ENCODE measurements at regions of chr7 and their contacts with region 1.

Region 1: GRCh38 chr7:80918909-80919662 is at the start of gene SEMA3C:
- DNase-seq: peak; percentile 97
- H3K4me3 ChIP-seq: peak within 1 kb of the TSS; percentile 63 to 99 (median 99)
- H3K27ac ChIP-seq: peak within 1 kb of the TSS; percentile 97
- H3K4me1 ChIP-seq: peaks cover 34% of the 10 kb centered on the region
- H3K27me3 ChIP-seq: no peaks in the 10 kb centered on the region
- CTCF ChIP-seq: peak in 1 of 2 donors; percentile 34
- total RNA-seq, gene SEMA3C: 312 to 708 TPM

Region 2: DNA sequence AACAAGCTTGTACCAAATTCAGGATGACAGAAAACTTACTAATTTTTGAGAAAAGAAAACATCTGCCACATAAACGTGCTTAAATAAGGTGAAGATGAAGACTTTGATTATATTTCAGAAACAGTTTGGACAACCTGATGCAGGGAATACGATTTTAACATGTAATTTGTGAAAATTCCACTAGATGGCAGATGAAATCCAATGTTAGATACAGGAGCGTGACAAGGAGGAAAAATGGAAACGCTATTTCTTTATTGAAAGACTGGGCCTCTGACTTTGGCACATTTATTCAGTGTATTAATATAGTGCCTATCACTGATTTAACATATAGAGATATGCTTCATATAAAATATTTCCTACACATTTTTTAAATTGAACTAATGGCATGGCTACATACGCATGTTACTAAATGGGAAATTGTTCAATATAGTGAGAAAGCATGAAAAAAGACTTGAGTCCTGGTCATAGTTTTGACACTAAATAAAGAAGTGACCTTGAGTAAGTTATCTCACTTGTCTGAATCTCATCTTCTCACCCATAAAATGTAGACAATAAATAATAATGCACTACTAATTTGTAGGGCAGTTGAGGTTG is 219.9 kb before region 1 on chr7:
- CTCF ChIA-PET with region 1: no interaction called
- dilution Hi-C with region 1: no loop called
- in situ Hi-C with region 1: no loop called
- intact Hi-C with region 1: loop called (anchors 1 kb)
- DNase-seq: peak; percentile 32
- H3K4me3 ChIP-seq: no peak overlapping the region
- H3K27ac ChIP-seq: no peak overlapping the region
- H3K4me1 ChIP-seq: no peaks in the 10 kb centered on the region
- H3K27me3 ChIP-seq: no peaks in the 10 kb centered on the region
- CTCF ChIP-seq: peak; percentile 55 to 56

Region 3: DNA sequence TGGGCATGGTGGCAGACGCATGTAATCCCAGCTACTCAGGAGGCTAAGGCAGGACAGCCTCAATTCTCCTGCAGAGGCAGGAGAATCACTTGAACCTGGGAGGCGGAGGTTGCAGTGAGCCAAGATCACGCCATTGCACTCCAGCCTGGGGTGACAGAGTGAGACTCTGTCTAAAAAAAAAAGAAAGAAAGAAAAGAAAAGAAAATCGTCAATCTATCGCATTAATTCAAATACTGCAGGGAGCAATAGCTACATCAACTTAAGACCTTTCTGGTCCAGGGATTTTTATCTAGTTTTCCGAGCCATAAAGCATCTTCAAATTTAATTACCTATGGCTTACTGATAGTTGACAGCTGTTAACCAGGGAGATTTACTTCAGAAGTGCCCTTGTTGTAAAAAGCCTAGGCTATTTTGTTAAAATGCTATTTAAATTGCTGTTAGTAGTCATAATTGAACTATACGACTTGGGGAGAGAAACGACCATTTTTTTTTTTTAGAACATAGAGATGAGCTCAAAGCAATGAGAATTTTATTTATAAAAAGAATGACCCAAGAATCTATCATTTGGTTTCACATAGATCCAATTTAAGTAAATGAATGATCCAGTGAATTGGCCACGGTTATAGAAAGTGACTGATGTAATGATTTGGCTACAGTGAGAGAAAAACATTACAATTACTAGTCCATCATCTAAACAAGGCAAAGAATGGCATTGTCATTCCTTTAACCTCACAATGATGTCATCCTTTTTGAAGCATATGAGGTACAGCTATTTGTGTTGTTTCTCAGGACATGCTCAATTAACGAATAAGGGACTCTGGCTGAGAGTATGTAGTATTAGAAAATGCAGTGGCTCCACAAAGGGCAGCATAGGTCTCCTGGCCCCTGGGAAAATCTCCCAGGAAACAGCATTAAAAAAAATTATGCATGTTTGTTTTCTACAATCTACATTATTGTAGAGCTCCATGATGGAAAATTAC is 85.5 kb before region 1 on chr7:
- CTCF ChIA-PET with region 1: no interaction called
- dilution Hi-C with region 1: no loop called
- in situ Hi-C with region 1: no loop called
- intact Hi-C with region 1: loop called (anchors 5 kb)
- DNase-seq: peak; percentile 63
- H3K4me3 ChIP-seq: no peak overlapping the region
- H3K27ac ChIP-seq: peak overlapping the region; percentile 57
- H3K4me1 ChIP-seq: peaks cover 74% of the 10 kb centered on the region
- H3K27me3 ChIP-seq: no peaks in the 10 kb centered on the region
- CTCF ChIP-seq: no peak

Region 4: DNA sequence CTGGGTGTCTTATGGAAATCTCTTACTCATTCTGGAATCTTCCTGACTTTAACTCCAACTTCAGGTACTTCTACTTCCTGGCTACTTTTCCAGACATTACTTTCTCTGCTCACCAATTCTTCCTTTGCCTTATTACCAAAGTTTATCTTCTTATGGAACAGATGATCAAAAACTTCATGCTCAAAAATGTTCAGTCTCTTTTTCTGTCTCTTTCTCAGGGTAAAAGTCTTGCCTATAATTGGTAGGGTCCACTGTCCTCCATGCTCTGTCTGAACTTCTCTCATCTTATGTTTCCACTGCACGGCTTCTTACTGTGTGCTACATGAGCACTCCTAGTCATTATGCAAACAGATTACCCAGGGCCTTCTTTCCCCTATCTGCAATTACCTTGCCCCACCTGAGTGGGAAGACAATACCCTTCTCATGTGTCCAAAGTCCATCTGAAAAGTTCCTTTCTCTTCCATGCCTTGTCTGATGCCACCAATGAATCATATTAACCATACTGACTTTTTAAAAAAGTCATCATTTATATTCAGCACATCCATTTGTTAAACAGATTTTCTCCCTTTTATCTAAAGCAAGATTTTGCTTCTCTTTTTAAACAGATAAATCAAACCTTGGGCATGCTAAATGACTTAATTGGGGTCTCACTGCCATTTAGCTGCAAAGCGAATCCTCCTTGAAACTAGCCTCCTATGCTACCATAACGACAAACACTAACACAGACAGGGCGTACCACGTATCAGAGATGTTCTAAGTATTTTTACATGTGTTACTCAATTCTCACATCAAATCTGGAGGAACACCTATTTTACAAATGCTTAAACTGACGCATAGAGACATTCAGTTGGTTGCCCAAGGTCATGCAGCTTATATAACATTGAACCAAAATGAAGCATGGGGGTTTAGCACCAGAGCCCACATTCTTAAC is 49.0 kb before region 1 on chr7:
- CTCF ChIA-PET with region 1: no interaction called
- dilution Hi-C with region 1: no loop called
- in situ Hi-C with region 1: no loop called
- intact Hi-C with region 1: no loop called
- DNase-seq: no peak
- H3K4me3 ChIP-seq: no peak overlapping the region
- H3K27ac ChIP-seq: peak overlapping the region; percentile 39
- H3K4me1 ChIP-seq: peaks cover 11% of the 10 kb centered on the region
- H3K27me3 ChIP-seq: no peaks in the 10 kb centered on the region
- CTCF ChIP-seq: no peak

Region 5: DNA sequence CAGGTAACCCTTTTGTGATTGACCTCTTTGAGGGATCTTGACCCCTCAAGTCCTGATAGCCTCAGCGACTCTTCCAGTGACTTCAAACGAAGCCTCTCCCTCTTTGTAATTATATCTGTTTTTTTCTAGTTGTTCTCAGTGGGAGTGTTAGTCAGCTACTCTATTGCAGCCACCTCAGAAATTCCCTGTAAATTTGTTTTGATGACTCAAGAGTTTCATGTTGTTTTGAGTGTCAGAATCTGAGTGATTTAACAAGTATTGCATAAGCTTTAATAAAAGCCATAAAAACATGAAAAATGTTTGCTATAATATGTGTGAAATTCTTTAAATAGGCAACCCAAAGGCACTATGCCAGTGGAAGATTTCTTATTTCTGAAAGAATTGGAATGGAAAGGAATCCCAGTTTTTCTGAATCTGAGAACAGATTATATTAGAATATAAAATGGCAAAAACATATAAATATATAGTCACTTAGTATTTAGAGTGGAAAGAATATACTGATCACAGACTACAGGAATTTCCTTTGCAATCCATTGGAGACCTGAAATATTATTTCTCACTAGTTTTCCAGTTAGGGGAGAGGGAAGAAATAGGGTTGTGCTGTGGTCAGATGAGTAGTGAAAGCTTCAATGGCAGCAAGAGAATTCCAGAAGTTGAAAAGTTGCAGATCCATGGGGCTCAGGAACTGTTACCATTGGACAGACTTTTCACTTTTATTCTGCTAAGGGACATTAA is 94.2 kb after region 1 on chr7:
- CTCF ChIA-PET with region 1: interaction called, 4 read pairs
- dilution Hi-C with region 1: loop called (anchors 5 kb)
- in situ Hi-C with region 1: no loop called
- intact Hi-C with region 1: loop called (anchors 1 kb)
- DNase-seq: peak; percentile 92
- H3K4me3 ChIP-seq: no peak overlapping the region
- H3K27ac ChIP-seq: peak overlapping the region; percentile 82
- H3K4me1 ChIP-seq: peaks cover 17% of the 10 kb centered on the region
- H3K27me3 ChIP-seq: no peaks in the 10 kb centered on the region
- CTCF ChIP-seq: no peak

Region 6: DNA sequence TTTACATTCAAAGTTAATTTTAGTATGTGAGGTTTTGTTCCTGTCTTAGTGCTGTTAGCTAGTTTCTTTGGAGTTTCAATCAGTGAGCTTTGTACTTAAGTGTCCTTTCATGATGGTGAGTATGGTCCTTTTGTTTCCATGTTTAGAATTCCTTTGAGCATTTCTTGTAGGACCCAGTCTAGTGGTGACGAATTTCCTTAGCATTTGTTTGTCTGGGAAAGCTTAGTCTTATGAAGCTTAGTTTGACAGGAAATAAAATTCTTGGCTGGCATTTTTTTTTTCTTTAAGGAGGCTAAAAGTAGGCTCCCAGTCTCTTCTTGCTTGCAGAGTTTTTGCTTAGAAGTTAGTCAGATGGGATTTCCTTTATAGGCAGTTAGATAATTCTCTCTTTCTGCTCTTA is 208.9 kb after region 1 on chr7:
- CTCF ChIA-PET with region 1: no interaction called
- dilution Hi-C with region 1: no loop called
- in situ Hi-C with region 1: no loop called
- intact Hi-C with region 1: no loop called
- DNase-seq: no peak
- H3K4me3 ChIP-seq: no peak overlapping the region
- H3K27ac ChIP-seq: no peak overlapping the region
- H3K4me1 ChIP-seq: no peaks in the 10 kb centered on the region
- H3K27me3 ChIP-seq: no peaks in the 10 kb centered on the region
- CTCF ChIP-seq: no peak

Region 7: DNA sequence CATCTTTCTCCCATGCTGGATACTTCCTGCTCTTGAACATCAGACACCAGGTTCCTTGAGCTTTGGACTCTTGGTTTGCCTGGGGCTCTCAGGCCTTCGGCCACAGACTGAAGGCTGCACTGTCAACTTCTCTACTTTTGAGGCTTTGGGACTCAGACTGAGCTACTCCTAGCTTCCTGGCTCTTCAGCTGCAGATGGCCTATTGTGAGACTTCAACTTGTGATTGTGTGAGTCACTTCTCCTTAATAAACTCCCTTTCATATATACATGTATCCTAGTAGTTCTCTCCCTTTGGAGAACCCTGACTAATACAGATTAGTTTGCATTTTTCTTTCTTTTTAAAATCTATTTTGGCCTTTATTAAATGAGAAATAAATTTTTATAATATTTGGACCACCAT is 275.9 kb after region 1 on chr7:
- CTCF ChIA-PET with region 1: interaction called, 13 read pairs
- dilution Hi-C with region 1: no loop called
- in situ Hi-C with region 1: no loop called
- intact Hi-C with region 1: no loop called
- DNase-seq: peak; percentile 50
- H3K4me3 ChIP-seq: no peak overlapping the region
- H3K27ac ChIP-seq: no peak overlapping the region
- H3K4me1 ChIP-seq: peaks cover 6% of the 10 kb centered on the region
- H3K27me3 ChIP-seq: no peaks in the 10 kb centered on the region
- CTCF ChIP-seq: no peak

Region 8: DNA sequence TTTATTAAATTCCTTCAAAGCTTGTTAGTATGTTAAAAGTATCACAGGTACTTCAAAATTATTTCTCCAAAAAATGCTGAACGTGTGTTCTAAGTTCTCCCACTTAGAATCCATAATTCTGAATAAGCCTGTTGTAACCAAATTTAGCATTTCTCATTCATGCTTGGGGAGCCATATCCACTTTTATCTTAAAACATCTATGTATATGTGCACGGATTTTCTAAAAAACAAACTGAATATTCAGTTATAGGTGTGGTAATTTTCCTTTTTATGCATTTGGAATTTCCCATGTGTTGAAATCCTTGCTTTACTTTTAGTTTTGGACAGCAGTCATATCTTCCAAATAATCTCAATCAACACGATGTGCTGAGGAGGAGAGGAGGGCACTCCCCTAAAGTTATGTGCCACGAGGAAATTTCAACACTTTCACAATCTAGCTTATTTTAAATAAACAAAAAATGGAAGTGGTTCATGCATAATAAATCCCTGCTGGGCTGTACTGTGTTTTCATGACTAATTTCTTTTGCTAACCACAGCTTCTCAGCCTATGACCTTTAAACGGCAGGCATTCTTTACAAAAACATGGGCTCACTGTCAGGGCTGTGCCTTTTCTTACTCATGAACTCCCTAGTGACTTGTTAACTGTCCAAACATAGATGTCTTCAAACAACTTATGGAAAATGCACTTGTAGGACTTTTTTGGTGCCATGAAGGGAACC is 380.0 kb after region 1 on chr7:
- CTCF ChIA-PET with region 1: interaction called, 6 read pairs
- dilution Hi-C with region 1: no loop called
- in situ Hi-C with region 1: no loop called
- intact Hi-C with region 1: loop called (anchors 10 kb)
- DNase-seq: peak; percentile 97
- H3K4me3 ChIP-seq: no peak overlapping the region
- H3K27ac ChIP-seq: peak overlapping the region; percentile 84
- H3K4me1 ChIP-seq: peaks cover 22% of the 10 kb centered on the region
- H3K27me3 ChIP-seq: no peaks in the 10 kb centered on the region
- CTCF ChIP-seq: no peak

Region 9: DNA sequence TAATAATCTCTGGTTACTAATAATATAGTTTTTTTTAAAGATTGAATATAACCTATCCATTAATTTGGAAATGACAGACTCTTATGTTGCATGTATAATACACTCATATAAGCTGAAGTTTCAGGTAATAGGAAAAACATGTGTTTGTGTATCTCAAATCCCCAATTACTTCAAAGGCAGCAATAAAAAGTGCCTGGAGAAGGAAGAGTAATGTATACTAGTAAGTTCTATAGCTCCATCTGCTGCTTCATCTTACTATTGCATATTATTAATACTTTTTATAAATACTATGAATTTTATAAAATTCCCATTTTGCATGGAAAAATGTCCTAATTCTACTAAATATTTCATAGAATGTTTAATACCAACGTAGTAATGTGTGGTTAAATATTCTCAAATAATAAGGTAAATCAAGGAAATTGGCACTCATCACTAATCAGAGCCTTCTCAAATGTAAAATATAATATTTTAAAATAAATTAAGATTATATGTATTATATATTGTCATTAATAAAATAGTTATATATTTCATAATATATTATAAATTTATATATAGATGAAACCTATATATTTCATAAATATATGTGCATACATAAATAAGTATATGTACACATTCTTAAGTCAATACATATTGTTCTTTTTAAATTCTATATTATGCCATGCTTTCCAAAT is 538.9 kb after region 1 on chr7:
- CTCF ChIA-PET with region 1: no interaction called
- dilution Hi-C with region 1: no loop called
- in situ Hi-C with region 1: loop called (anchors 5 to 10 kb)
- intact Hi-C with region 1: no loop called
- DNase-seq: no peak
- H3K4me3 ChIP-seq: no peak overlapping the region
- H3K27ac ChIP-seq: no peak overlapping the region
- H3K4me1 ChIP-seq: no peaks in the 10 kb centered on the region
- H3K27me3 ChIP-seq: no peaks in the 10 kb centered on the region
- CTCF ChIP-seq: peak; percentile 43 to 61

Measured in mammary epithelial cell (primary cell).